Colonic mucosa (tissue), 4 donors: ENCODE measurements at regions of chr19 and their contacts with region 1.

Region 1: GRCh38 chr19:53424968-53425597 is 6.7 kb upstream of the ZNF761 start:
- DNase-seq: peak; percentile 75
- H3K4me3 ChIP-seq: no peak overlapping the region
- H3K27ac ChIP-seq: no peak overlapping the region
- H3K4me1 ChIP-seq: no peaks in the 10 kb centered on the region
- H3K27me3 ChIP-seq: no peaks in the 10 kb centered on the region
- CTCF ChIP-seq: peak; percentile 56

Region 2: GRCh38 chr19:53246498-53246897 is 178.6 kb before region 1 on chr19:
- intact Hi-C with region 1: no loop called
- DNase-seq: no peak
- H3K4me3 ChIP-seq: no peak overlapping the region
- H3K27ac ChIP-seq: no peak overlapping the region
- H3K4me1 ChIP-seq: no peaks in the 10 kb centered on the region
- H3K27me3 ChIP-seq: no peaks in the 10 kb centered on the region
- CTCF ChIP-seq: no peak

Region 3: GRCh38 chr19:53357821-53358581 is 67.1 kb before region 1 on chr19:
- intact Hi-C with region 1: no loop called
- DNase-seq: no peak
- H3K4me3 ChIP-seq: no peak overlapping the region
- H3K27ac ChIP-seq: no peak overlapping the region
- H3K4me1 ChIP-seq: no peaks in the 10 kb centered on the region
- H3K27me3 ChIP-seq: no peaks in the 10 kb centered on the region
- CTCF ChIP-seq: no peak

Region 4: DNA sequence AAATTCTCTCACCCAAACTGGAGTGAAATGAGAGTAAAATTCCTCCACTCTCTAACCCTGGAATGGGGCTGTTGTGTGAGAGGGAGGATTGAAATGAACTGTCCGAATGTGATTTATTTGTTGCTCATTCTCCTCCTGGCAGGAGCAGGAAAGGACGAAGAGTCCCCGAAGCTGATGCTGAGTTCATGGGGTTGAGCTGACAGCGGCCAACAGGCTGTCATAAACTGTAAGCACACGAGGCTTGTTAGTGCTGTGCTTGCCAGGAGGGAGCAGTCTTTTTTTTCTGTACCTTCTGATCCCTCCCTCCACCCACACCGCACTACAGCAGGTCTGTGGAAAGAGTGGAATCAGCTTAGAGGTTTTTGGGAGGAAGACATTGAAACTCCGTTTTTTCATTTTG is 79.8 kb after region 1 on chr19:
- intact Hi-C with region 1: loop called (anchors 10 kb)
- DNase-seq: no peak
- H3K4me3 ChIP-seq: no peak overlapping the region
- H3K27ac ChIP-seq: no peak overlapping the region
- H3K4me1 ChIP-seq: no peaks in the 10 kb centered on the region
- H3K27me3 ChIP-seq: no peaks in the 10 kb centered on the region
- CTCF ChIP-seq: no peak

Region 5: GRCh38 chr19:53520550-53521372 is 95.7 kb after region 1 on chr19:
- intact Hi-C with region 1: no loop called
- DNase-seq: peak; percentile 97
- H3K4me3 ChIP-seq: peak overlapping the region; percentile 49
- H3K27ac ChIP-seq: peak overlapping the region; percentile 60
- H3K4me1 ChIP-seq: peaks cover 4% of the 10 kb centered on the region
- H3K27me3 ChIP-seq: no peaks in the 10 kb centered on the region
- CTCF ChIP-seq: no peak